Posterior vena cava (tissue), 2 donors: ENCODE measurements at regions of chr6 and their contacts with region 1.

Region 1: DNA sequence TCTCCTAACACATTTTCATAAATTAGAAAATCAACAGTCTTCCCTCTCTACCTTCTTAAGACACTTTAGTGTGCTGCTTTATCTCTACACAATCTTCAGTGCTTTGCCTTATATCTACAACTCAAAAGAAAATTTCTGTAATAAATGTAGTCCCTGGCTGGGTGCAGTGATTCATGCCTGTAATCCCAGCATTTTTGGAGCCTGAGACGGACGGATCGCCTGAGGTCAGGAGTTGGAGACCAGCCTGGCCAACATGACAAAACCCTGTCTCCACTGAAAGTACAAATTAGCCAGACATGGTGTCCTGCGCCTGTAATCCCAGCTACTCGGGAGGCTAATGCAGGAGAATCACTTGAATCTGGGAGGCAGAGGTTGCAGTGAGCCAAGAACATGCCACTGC is 9.7 kb upstream of the EDN1 start:
- DNase-seq: no peak

Region 2: DNA sequence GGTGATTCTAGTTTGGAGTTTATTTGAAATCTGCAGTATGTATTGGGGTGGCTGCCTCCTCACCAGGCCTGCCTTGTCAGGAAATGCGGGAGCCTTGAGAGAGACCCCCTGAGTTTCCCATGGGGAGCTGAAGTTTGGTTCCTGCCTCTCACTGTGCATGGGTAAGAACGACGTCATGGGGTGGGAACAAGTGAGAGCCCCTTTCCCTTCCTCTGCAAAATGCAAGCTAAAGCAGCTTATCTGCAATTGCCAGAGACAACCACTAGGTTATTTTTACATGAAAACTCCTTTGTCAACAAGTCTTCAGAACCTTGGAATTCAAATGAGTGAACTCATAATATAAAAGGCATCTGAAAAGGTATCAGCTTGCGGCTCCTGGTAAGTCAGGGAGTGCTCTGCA is 684.6 kb before region 1 on chr6:
- intact Hi-C with region 1: loop called in 1 of 2 experiments (anchors 5 kb)
- DNase-seq: no peak

Region 3: DNA sequence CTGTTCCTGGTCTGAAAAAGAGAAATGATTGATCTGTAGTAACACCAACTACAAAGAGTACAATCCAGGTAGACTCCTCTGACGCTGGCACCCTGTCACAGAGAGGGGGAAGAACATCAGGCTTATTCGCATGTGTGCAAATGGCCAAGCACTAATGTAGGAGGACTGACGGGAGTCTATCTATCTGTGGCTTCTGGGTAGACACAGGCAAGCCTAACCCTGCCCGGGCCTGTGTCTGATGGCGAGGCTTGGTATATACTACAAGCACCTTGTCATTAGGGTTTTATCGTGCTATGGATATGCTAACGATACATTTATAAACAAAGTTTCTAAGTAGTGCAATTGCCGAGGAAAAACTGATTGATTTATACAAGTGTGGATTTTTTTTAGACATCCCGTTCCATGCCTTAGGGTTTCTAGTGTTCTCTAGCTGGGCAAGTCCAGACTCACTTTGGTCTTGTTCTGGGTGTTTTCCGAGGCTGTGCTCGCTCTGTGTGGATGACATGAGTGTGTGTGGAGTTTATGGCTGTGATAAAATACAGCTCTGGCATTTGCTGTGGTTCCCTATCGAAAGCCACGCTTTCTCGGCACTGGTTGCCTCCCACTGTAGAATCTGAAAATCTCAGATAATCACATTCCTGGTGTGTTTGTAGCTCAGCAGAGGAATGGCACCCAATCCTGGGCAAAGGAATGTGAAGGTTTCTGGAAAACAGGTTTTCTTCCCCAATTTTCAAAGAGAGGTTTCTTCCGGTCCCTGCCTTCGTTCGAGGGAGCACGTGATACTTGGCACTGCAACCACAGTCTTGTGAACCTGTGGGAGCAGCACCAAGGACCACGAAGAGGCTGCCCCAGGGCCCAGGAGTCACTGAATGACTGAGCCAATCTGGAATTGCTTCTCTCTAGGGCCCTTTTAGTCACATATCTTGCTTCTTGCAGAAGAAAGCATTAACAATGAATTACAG is 57.8 kb before region 1 on chr6:
- intact Hi-C with region 1: no loop called
- DNase-seq: no peak

Region 4: GRCh38 chr6:12331956-12332749 is 51.7 kb after region 1 on chr6:
- intact Hi-C with region 1: no loop called
- DNase-seq: no peak

Region 5: GRCh38 chr6:12436683-12437082 is 156.2 kb after region 1 on chr6:
- intact Hi-C with region 1: no loop called
- DNase-seq: no peak

Region 6: GRCh38 chr6:14270925-14271791 is 1990.7 kb after region 1 on chr6:
- intact Hi-C with region 1: no loop called
- DNase-seq: no peak